Activated T-helper 1 cell treated with anti-CD3 and anti-CD28 coated beads, Interleukin-12 subunit alpha, Interleukin-12 subunit beta, Interleukin-2, Interleukin-4 antibody, amounts not matched to agents 30 ng/mL and 10 ng/mL and 1 ng/mL, durations not matched to agents 14 hours and 24 hours and 36 hours (primary cell): ENCODE measurements at regions of chr22 and their contacts with region 1.

Region 1: GRCh38 chr22:43110444-43110926 is at the start of gene BIK:
- DNase-seq: peak; percentile 23
- H3K4me3 Mint-ChIP-seq: peak within 1 kb of the TSS; percentile 67
- H3K27ac Mint-ChIP-seq: no peak within 1 kb of the TSS
- H3K4me1 Mint-ChIP-seq: no peaks in the 10 kb centered on the region
- H3K27me3 Mint-ChIP-seq: peaks cover 41% of the 10 kb centered on the region
- total RNA-seq, gene BIK: 2.3 and 2.5 TPM in 2 replicates

Region 2: DNA sequence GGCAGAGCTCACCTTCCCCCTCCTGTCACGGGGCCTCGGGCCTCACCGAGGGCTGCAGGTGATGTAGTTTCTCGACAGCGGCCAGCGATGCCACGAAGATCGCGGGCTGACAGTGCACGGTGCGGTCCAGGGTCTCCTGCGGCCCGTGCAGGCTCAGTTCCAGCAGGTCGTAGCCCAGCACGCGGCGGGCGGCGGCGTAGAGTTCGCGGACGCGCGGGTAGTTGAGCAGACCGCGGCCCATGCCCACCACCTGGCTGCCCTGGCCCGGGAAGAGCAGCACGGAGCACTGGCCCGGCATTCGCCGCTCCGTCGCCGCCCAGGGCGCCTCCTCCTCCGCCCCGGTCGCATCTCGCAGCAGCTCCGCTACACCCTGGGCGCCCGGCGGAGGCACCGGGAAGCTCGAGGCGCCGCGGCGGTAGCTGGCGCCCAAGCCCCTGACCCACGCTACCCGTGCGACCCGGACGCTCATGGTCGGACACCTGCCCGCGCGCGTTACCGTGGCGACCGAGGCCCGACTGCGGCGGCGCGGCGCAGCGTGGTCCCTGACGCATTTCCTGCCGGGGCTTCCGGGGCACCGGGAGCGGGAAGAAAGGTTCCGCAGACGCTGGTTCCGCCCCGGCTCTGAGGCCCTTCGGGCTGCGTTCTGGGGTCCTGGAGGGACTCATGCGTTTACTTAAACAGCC is 32.5 kb after region 1 on chr22 and contains the start of gene MCAT:
- intact Hi-C with region 1: loop called (anchors 2 kb)
- DNase-seq: peak; percentile 87
- H3K4me3 Mint-ChIP-seq: peak within 1 kb of the TSS; percentile 89
- H3K27ac Mint-ChIP-seq: peak within 1 kb of the TSS; percentile 92
- H3K4me1 Mint-ChIP-seq: peaks cover 33% of the 10 kb centered on the region
- H3K27me3 Mint-ChIP-seq: no peaks in the 10 kb centered on the region
- total RNA-seq, gene MCAT: 20.3 and 23.4 TPM in 2 replicates

Region 3: DNA sequence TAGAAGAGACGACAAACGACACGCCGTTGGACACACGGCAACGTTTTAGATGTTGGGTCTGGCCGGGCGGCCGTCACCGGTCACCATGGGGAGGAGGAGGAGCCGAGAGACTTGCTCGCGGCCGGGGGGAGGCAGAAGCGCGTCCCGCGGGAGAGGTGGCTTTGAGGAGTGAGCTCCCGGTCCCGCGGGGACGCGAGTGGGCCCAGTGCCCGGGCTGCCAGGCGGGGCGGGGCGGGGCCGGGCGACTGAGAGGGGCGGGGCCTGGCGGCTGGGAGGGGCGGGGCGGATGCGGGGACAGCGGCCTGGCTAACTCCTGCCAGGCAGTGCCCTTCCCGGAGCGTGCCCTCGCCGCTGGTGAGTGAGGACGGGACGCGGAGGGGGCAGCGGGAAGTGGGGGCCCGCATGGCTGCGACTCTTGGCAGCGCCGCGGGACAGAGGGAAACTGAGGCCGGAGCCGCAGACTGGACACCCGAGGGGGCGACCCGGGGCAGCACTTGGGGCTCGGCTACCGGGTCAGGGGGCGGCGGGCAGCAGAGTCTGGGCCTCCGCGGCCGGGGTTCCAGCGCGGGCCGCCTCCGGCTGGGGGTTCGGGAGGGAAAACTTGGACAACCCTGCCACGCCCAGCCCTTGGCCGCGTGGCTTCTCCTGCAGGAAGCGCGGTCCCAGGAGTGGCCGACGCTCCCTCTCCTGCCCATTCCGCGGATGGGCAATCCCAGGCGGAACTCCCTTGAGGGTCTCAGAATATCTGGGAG is 40.9 kb after region 1 on chr22 and contains the start of gene TSPO:
- intact Hi-C with region 1: loop called (anchors 2 kb)
- DNase-seq: peak; percentile 44
- H3K4me3 Mint-ChIP-seq: peak within 1 kb of the TSS; percentile 94
- H3K27ac Mint-ChIP-seq: peak within 1 kb of the TSS; percentile 91
- H3K4me1 Mint-ChIP-seq: peaks cover 17% of the 10 kb centered on the region
- H3K27me3 Mint-ChIP-seq: no peaks in the 10 kb centered on the region
- total RNA-seq, gene TSPO: 115 and 121 TPM in 2 replicates

Region 4: DNA sequence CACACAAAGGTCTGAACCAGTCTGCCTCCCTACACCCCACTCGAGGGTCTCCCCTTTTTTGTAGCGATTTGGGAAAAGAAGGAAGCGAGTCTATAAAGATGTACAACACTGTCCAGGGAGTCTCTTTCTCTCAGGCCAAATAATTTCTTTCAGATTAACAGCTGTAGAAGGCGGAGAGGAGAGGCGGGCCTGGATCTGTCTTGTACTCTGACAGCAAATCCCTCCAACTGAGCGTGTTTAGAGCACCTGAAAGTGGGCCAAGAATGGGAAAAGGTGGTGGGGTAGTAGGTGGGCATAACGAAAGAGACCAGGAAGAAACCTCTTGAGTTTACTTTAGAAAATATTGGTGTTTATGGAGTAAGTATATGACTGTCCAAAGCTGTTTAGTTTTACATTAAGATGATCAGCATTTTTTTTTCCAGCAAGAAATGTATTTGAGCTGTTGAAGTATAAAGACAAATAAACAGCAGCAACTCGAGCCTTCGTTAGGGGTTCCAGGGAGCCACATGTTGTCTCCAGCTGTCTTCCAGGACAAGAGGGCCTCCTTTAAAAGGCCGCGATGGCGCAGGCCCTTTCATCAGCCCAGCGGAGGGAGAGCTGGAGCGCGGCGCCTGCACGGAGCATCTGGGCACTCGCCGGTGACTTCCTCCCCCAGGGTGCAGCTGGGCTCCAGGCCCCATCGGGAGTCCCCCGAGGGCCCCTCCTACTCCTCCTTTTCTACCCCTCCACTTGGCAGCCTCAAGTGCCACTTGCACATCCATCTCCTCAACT is 197.8 kb after region 1 on chr22:
- intact Hi-C with region 1: no loop called
- DNase-seq: no peak
- H3K4me3 Mint-ChIP-seq: no peak overlapping the region
- H3K27ac Mint-ChIP-seq: no peak overlapping the region
- H3K4me1 Mint-ChIP-seq: no peaks in the 10 kb centered on the region
- H3K27me3 Mint-ChIP-seq: peaks cover 9% of the 10 kb centered on the region